GM12878 (cell line): ENCODE measurements at regions of chr6 and their contacts with region 1.

Region 1: DNA sequence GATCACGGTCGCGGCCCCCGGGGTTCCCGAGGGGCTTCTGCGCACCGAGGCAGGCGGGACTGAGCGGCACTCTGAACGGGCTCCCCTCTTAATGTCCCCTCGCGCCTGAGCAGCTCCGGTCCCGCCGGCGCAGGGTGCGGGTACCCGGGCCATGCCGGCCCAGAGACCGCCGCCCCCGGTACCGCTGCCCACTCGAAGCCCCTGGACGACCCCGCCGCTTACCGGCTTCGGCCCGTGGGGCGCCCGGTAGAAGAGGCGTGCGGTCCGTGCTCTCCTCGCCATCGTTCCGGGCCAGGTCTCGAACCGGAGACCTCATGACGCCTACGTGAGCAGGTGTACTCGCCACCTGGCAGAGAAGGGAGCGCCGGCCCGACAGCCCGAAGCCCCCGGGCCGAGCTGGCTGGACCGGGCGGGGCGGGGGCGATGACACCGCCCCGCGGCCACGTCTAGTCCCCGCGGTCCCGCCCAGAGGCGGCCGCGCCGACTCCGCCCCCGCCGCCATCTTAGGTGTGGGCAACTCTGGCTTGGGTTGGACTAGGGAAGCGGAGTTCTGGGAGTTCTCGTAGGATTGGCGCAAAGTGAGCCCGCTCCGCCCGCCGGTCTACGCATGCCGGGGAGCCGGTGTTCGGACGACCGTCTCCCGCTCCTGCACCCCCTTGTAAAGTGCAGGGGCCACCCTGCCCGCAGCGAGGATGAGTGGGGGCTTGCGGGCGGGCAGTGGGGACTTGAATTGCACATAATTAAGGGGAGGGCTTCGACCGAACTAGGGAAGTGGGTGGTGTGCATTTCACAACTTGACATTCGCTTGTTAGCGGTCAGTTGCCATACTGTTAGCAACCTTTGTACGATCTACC is at the start of gene SLC17A5:
- DNase-seq: peak; percentile 57
- ATAC-seq: peak; percentile 95
- H3K4me3 ChIP-seq: peak within 1 kb of the TSS; percentile 83
- H3K27ac ChIP-seq: peak within 1 kb of the TSS; percentile 86
- H3K4me1 ChIP-seq: no peaks in the 10 kb centered on the region
- H3K27me3 ChIP-seq: no peaks in the 10 kb centered on the region
- CTCF ChIP-seq: no peak
- EP300 ChIP-seq: 0 out of 4 replicates have a peak, but pooled peaks of 1 of the 2 experiments have one; percentile 6
- POLR2A ChIP-seq: peak; percentile 78
- RAD21 ChIP-seq: no peak
- polyA plus RNA-seq, gene SLC17A5: 2.3 to 2.7 TPM

Region 2: GRCh38 chr6:73451223-73452107 is 202.3 kb before region 1 on chr6:
- CTCF ChIA-PET with region 1: interaction called, 8 read pairs
- POLR2A ChIA-PET with region 1: interaction called, 5 read pairs
- RAD21 ChIA-PET with region 1: interaction called, 9 read pairs
- SMC1A ChIA-PET with region 1: interaction called, 8 read pairs
- in situ Hi-C with region 1: no loop called
- intact Hi-C with region 1: loop called (anchors 5 kb)
- DNase-seq: no peak
- ATAC-seq: peak; percentile 72
- H3K4me3 ChIP-seq: peak overlapping the region; percentile 91
- H3K27ac ChIP-seq: peak overlapping the region; percentile 95
- H3K4me1 ChIP-seq: 0 out of 2 replicates have a peak, but pooled peaks cover 3% of the 10 kb centered on the region
- H3K27me3 ChIP-seq: no peaks in the 10 kb centered on the region
- CTCF ChIP-seq: no peak
- EP300 ChIP-seq: no peak
- POLR2A ChIP-seq: peak; percentile 84
- RAD21 ChIP-seq: no peak

Region 3: DNA sequence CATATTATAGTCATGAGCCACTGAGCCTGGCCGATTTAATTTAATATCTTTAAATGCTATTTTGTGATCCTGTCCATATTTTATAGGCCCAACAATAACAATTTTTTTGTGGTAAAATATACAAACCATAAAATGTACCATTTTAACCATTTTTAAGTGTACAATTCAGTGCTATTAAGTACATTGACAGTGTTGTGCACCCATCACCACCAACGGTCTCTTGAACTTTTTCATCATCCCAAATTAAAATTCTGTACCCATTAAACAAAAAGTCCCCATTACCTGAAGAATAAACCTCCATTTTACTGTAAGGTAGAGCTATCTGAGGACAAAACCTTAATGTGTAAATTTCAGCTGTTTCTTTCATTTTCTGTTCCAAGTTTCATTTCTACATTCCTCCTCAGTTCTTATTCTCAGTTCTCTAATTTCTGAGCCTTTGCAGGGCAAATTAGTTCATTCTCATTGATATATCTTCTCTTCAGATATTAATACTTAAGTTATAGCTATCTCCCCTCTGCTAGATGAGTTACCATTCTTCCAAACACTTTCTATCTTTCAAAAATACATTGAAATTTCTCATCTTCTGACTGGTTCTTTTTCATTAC is 182.0 kb before region 1 on chr6:
- CTCF ChIA-PET with region 1: interaction called, 3 read pairs
- POLR2A ChIA-PET with region 1: interaction called, 3 read pairs
- RAD21 ChIA-PET with region 1: interaction called, 12 read pairs
- SMC1A ChIA-PET with region 1: interaction called, 4 read pairs
- in situ Hi-C with region 1: no loop called
- intact Hi-C with region 1: no loop called
- DNase-seq: peak; percentile 58
- ATAC-seq: peak; percentile 98
- H3K4me3 ChIP-seq: peak overlapping the region; percentile 48; the same call in 1 of the 2 replicates
- H3K27ac ChIP-seq: peak overlapping the region; percentile 90
- H3K4me1 ChIP-seq: peaks cover 15% of the 10 kb centered on the region
- H3K27me3 ChIP-seq: no peaks in the 10 kb centered on the region
- CTCF ChIP-seq: no peak
- EP300 ChIP-seq: peak; percentile 43 to 89; a peak in 3 of 4 replicates
- POLR2A ChIP-seq: no peak
- RAD21 ChIP-seq: no peak

Region 4: GRCh38 chr6:73580247-73581149 is 73.3 kb before region 1 on chr6:
- CTCF ChIA-PET with region 1: interaction called, 9 read pairs
- POLR2A ChIA-PET with region 1: interaction called, 9 read pairs
- RAD21 ChIA-PET with region 1: interaction called, 7 read pairs
- SMC1A ChIA-PET with region 1: interaction called, 6 read pairs
- in situ Hi-C with region 1: no loop called
- intact Hi-C with region 1: loop called (anchors 5 kb)
- DNase-seq: peak; percentile 61
- ATAC-seq: peak; percentile 92
- H3K4me3 ChIP-seq: peak overlapping the region; percentile 34; the same call in 1 of the 2 replicates
- H3K27ac ChIP-seq: peak overlapping the region; percentile 96
- H3K4me1 ChIP-seq: peaks cover 20% of the 10 kb centered on the region
- H3K27me3 ChIP-seq: no peaks in the 10 kb centered on the region
- CTCF ChIP-seq: peak; percentile 42 to 53 (median 46); a peak in 5 of 6 replicates
- EP300 ChIP-seq: no peak
- POLR2A ChIP-seq: peak; percentile 71
- RAD21 ChIP-seq: 0 out of 2 replicates have a peak, but pooled peaks have one; percentile 36

Region 5: GRCh38 chr6:73631849-73632248 is 21.9 kb before region 1 on chr6:
- CTCF ChIA-PET with region 1: interaction called, 11 read pairs
- POLR2A ChIA-PET with region 1: no interaction called
- RAD21 ChIA-PET with region 1: interaction called, 5 read pairs
- SMC1A ChIA-PET with region 1: no interaction called
- in situ Hi-C with region 1: no loop called
- intact Hi-C with region 1: no loop called
- DNase-seq: no peak
- ATAC-seq: no peak
- H3K4me3 ChIP-seq: no peak overlapping the region
- H3K27ac ChIP-seq: no peak overlapping the region
- H3K4me1 ChIP-seq: no peaks in the 10 kb centered on the region
- H3K27me3 ChIP-seq: no peaks in the 10 kb centered on the region
- CTCF ChIP-seq: no peak
- EP300 ChIP-seq: no peak
- POLR2A ChIP-seq: no peak
- RAD21 ChIP-seq: no peak

Region 6: GRCh38 chr6:73732845-73733675 is 79.3 kb after region 1 on chr6:
- CTCF ChIA-PET with region 1: interaction called, 28 read pairs
- POLR2A ChIA-PET with region 1: interaction called, 3 read pairs
- RAD21 ChIA-PET with region 1: interaction called, 10 read pairs
- SMC1A ChIA-PET with region 1: interaction called, 8 read pairs
- in situ Hi-C with region 1: no loop called
- intact Hi-C with region 1: no loop called
- DNase-seq: peak; percentile 31
- ATAC-seq: peak; percentile 90
- H3K4me3 ChIP-seq: no peak overlapping the region
- H3K27ac ChIP-seq: no peak overlapping the region
- H3K4me1 ChIP-seq: peaks cover 4% of the 10 kb centered on the region
- H3K27me3 ChIP-seq: no peaks in the 10 kb centered on the region
- CTCF ChIP-seq: peak; percentile 86 to 95 (median 92)
- EP300 ChIP-seq: no peak
- POLR2A ChIP-seq: no peak
- RAD21 ChIP-seq: peak; percentile 85

Region 7: GRCh38 chr6:73798592-73798991 is 144.8 kb after region 1 on chr6:
- CTCF ChIA-PET with region 1: no interaction called
- POLR2A ChIA-PET with region 1: no interaction called
- RAD21 ChIA-PET with region 1: no interaction called
- SMC1A ChIA-PET with region 1: no interaction called
- in situ Hi-C with region 1: no loop called
- intact Hi-C with region 1: no loop called
- DNase-seq: no peak
- ATAC-seq: peak; percentile 86
- H3K4me3 ChIP-seq: no peak overlapping the region
- H3K27ac ChIP-seq: no peak overlapping the region
- H3K4me1 ChIP-seq: no peaks in the 10 kb centered on the region
- H3K27me3 ChIP-seq: no peaks in the 10 kb centered on the region
- CTCF ChIP-seq: 0 out of 6 replicates have a peak, but pooled peaks of 2 of the 3 experiments have one; percentile 6 to 22
- EP300 ChIP-seq: no peak
- POLR2A ChIP-seq: no peak
- RAD21 ChIP-seq: 0 out of 2 replicates have a peak, but pooled peaks have one; percentile 18